ENCODE measurements at regions of chr14 and their contacts with region 1.

Region 1: DNA sequence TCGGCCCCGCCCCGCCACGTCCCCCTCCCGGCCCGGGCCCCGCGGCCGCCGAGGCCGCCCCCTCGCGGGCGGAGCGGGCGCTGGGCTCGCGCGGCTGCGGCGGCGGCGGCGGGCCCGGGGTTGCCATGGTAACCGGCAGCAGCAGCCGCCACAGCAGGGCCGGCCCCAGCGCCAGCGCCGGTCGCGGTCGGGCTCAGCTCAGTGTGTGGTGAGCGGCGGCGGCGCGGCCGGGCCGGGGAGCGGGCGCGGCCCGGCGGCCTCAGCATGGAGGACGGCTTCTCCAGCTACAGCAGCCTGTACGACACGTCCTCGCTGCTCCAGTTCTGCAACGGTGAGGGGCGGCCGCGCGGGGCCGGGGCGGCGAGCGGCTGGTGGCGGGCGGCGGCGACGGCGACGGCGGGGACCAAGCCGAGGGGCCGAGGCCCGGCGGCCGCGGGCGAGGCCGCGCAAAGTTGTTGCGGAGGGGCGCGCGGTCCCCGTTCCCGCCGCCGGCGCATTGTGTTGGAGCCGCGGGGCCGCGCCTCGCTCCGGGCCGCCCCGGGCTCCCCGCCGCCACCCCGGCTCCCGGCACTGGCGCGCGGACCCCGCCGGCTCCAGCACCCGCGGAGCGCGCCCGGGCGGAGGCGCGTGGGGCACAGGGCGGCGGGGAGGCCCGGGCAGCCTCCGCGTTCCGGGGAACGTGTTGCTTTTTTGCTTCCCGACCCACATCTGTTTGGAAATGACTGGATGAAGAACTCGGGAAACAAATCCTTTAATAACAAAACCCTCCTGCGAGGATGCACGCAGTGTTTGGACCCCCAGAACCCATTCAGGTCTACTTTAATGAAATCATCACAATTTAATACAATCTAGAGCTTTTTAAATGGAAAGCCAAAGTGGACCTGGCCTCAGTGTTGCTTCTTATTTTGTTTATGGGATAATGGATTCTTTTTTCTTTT is at the start of gene EML1:
- DNase-seq: peak; percentile 80
- ATAC-seq: peak; percentile 91
- H3K4me3 ChIP-seq: peak within 1 kb of the TSS; percentile 75
- H3K27ac ChIP-seq: no peak within 1 kb of the TSS
- H3K4me1 ChIP-seq: peaks cover 20% of the 10 kb centered on the region
- H3K27me3 ChIP-seq: no peaks in the 10 kb centered on the region
- CTCF ChIP-seq: no peak
- total RNA-seq, gene EML1: 12.0 TPM in 2 replicates

Region 2: DNA sequence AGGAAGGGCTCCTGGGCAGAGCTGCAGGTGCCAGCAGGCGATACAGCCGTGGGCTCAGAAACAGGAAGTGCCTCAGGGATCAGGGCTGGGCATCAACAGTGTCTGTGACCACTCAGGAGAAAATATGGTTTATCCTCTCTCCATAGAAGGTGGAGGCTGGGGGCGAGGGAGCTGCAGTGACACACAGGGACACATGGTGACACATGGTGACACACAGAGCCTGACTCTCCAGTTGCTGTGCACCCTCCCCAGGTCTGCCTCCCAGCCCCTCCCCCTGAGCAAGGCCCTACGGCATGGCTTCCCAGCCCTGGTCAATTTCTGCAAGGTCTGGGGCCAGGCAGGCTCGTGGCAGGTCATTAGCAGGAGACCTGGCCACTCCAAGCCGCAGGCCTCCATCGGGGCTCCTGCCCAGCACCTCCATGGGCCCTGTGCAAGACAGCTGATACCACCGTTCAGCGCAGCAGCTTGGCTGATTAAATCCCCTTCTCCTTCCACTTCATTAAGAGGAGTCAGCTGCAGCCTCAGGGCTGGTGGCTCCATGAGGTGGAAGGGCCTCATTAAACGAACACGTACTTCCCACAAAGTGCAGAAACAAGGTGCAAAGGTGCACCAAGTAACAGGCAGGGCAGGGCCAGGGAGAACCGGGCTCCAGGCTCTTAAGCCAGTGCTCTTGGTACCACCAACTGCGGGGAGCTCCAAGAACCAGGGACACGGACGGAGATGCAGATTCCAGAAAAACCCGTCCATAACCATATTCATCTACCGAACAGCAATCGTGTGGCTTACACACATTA is 251.6 kb before region 1 on chr14:
- CTCF ChIA-PET with region 1: no interaction called
- POLR2A ChIA-PET with region 1: no interaction called
- intact Hi-C with region 1: no loop called
- DNase-seq: peak; percentile 37
- ATAC-seq: peak; percentile 25
- H3K4me3 ChIP-seq: no peak overlapping the region
- H3K27ac ChIP-seq: no peak overlapping the region
- H3K4me1 ChIP-seq: peaks cover 22% of the 10 kb centered on the region
- H3K27me3 ChIP-seq: no peaks in the 10 kb centered on the region
- CTCF ChIP-seq: no peak

Region 3: GRCh38 chr14:99729991-99730868 is 63.3 kb before region 1 on chr14:
- CTCF ChIA-PET with region 1: interaction called, 11 read pairs
- POLR2A ChIA-PET with region 1: no interaction called
- intact Hi-C with region 1: loop called (anchors 2 kb)
- DNase-seq: peak; percentile 76
- ATAC-seq: peak; percentile 81
- H3K4me3 ChIP-seq: peak overlapping the region; percentile 68
- H3K27ac ChIP-seq: no peak overlapping the region
- H3K4me1 ChIP-seq: no peaks in the 10 kb centered on the region; the same call in 1 of the 2 replicates
- H3K27me3 ChIP-seq: no peaks in the 10 kb centered on the region
- CTCF ChIP-seq: peak; percentile 82

Region 4: DNA sequence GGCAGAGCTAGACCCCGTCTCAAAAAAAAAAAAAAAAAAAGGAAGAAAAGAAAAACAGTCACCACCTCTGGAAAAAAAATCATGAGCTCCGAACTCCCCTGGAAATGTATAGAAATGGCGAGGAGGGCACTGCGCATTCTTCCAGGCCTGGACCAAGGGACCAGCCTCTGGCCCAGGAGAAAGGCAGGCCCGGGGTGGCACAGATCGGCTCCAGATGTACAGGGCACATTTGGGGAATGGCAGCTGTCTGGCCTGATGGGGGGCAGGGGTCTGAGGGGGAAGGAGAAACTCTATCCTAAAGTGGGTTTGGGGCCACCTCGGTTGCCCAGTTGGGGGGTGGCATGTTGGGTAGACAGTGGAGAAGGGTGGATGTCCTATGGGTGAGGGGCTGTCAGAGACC is 46.3 kb before region 1 on chr14:
- CTCF ChIA-PET with region 1: no interaction called
- POLR2A ChIA-PET with region 1: interaction called, 12 read pairs
- intact Hi-C with region 1: no loop called
- DNase-seq: no peak
- ATAC-seq: no peak
- H3K4me3 ChIP-seq: no peak overlapping the region
- H3K27ac ChIP-seq: no peak overlapping the region
- H3K4me1 ChIP-seq: peaks cover 17% of the 10 kb centered on the region
- H3K27me3 ChIP-seq: no peaks in the 10 kb centered on the region
- CTCF ChIP-seq: no peak

Region 5: DNA sequence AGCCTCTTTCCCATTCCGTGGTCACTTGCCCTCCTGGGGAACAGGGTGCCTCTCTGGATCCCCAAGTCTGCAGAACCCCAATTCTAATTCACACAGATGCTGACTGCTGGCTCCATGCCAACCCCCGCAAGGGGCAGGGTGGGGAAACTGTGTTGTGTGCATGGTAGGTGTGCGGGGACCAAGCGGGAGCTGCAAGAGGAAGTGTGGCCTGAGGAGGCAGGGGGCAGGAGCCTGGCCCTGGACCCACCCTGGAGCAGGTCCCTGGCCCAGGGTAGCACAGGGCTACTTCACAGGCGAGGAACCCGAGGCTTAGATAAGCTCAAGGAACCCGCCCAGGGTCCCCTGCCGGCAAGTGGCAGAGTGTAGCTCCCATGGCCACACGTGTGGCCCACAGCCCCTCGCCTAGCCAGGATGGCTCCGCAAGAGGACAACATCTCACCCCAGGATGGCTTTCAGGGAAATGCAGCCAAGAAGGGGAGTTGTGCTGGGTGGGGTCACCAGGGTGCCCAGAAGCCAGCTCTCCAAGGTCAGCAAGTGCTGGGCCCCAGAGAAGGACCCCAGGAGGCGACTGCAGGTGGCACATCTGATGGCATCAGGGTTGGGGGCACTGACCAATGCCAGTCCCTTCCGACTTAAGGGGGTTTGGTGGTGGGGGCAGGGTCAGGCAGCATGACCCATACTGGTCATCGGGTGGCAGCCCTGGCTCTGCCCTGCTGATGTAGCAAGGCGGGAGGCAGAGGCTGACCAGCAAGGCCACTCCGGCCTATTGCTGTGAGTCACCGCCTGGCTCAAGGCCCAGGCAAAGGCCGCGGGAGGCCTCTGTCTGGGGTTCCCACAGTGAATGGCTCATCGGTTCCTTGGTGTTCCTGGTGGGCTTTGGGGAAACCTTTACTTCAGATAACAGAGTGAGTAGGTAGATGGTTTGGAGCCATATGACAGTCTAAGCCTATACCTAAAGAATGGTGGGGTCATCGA is 37.6 kb before region 1 on chr14:
- CTCF ChIA-PET with region 1: interaction called, 7 read pairs
- POLR2A ChIA-PET with region 1: no interaction called
- intact Hi-C with region 1: loop called (anchors 2 kb)
- DNase-seq: peak; percentile 86
- ATAC-seq: peak; percentile 52
- H3K4me3 ChIP-seq: no peak overlapping the region
- H3K27ac ChIP-seq: peak overlapping the region; percentile 74
- H3K4me1 ChIP-seq: peaks cover 71% of the 10 kb centered on the region
- H3K27me3 ChIP-seq: no peaks in the 10 kb centered on the region
- CTCF ChIP-seq: no peak

Region 6: GRCh38 chr14:99884834-99885648 is 91.6 kb after region 1 on chr14:
- CTCF ChIA-PET with region 1: no interaction called
- POLR2A ChIA-PET with region 1: no interaction called
- intact Hi-C with region 1: loop called (anchors 2 kb)
- DNase-seq: peak; percentile 76
- ATAC-seq: peak; percentile 82
- H3K4me3 ChIP-seq: no peak overlapping the region
- H3K27ac ChIP-seq: no peak overlapping the region
- H3K4me1 ChIP-seq: peaks cover 5% of the 10 kb centered on the region
- H3K27me3 ChIP-seq: no peaks in the 10 kb centered on the region
- CTCF ChIP-seq: peak; percentile 90

Region 7: DNA sequence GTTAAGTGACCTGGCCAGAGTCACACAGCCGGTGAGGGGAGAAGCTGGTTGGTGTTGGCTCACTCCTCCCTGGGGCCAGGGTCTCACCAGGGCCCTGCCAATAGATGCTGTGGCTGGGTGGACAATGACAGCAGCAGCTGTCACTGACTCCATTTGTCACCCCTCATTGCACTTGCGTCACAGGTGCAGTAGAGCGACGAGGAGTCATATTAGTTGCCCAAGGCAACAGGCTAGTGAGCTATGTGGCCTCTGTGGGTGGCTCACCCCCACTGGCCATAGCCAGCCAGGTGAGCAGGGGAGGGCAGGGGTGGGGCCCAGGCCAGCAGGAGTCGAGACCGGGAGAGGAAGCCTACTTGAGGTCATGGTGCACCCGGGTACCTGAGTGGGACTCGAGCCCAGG is 539.3 kb after region 1 on chr14:
- CTCF ChIA-PET with region 1: no interaction called
- POLR2A ChIA-PET with region 1: no interaction called
- intact Hi-C with region 1: no loop called
- DNase-seq: no peak
- ATAC-seq: no peak; the same call in 1 of the 2 replicates
- H3K4me3 ChIP-seq: no peak overlapping the region
- H3K27ac ChIP-seq: no peak overlapping the region
- H3K4me1 ChIP-seq: no peaks in the 10 kb centered on the region
- H3K27me3 ChIP-seq: no peaks in the 10 kb centered on the region
- CTCF ChIP-seq: no peak

Region 8: DNA sequence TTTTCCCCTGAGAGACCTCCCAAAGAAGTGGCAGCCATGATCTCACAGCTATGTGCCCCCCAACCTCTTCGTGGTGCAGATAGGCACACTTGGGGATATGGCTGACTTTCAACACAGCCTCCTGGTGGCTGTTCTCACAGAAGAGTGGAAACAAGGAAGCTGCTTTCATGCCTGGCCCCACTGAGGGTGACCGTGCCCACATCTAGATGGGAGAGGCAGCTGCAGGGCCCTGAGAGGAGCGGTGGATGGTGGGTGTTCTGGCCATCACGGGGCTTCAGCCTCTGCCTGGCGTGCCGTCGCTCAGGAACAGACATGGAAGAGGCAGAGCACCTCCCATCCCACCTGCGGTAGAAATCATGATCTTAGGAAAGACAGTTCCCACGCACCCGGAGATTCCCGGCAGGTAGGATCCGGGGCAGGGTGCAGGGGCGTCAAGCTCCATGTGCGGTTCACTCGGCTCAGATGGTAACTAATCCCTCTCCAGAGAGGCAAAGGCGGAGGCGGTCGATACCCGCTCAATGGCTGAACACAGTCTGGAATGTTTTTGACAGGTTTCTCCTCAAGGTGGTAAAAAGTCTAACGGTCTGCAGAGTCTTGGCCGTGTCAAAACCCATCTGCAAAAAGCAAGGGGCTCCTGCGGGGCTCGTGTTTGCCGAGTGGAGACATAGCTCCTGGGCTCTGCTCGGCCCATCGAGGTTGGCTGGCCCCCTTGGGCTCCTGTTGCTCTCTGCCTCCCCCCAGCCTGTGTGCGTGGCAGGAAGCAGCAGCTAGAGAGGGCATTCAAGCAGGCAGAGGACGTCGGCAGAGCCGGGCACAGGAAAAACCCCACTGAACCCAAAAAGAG is 1335.2 kb after region 1 on chr14:
- CTCF ChIA-PET with region 1: no interaction called
- POLR2A ChIA-PET with region 1: no interaction called
- intact Hi-C with region 1: no loop called
- DNase-seq: no peak
- ATAC-seq: no peak
- H3K4me3 ChIP-seq: no peak overlapping the region
- H3K27ac ChIP-seq: no peak overlapping the region
- H3K4me1 ChIP-seq: no peaks in the 10 kb centered on the region
- H3K27me3 ChIP-seq: peaks cover 27% of the 10 kb centered on the region
- CTCF ChIP-seq: no peak